ENCODE measurements at regions of chr14 and their contacts with region 1.

Region 1: DNA sequence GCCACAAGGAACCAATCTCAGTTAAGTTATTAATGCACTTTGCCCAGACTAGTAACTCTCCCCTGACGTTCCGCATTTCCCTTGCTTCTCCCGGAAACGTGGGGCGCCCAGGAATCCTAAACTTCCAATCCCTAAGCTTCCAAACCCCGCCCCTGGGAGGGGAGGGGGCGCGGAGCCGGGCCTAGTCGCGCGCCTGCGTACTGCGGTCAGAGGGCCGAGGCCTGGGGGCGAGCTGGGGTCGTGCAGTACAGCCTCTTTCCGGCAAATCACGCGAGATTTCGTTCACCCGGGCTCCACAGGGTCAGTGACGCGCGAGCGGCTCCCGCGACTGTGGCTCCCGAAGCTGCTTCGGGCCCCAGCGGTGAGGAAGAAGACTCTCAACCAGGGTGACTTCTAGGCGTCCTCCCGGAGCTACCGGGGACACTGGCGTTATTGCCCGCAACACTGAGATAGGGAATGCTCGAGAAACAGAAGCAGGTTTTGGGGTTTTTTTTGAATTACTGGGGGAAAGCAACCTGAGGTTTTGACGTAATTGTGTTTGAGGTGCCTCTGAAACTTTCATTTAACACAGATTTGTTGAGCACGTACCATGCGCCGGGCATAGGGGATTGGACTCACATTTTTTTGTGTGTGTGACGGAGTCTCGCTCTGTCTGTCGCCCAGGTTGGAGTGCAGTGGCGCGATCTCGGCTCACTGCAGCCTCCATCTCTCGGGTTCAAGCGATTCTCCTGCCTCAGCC is at the start of gene PTGR2:
- DNase-seq: peak; percentile 97
- ATAC-seq: peak; percentile 91
- H3K4me3 ChIP-seq: peak within 1 kb of the TSS; percentile 72 to 75 (median 72)
- H3K27ac ChIP-seq: peak within 1 kb of the TSS; percentile 95
- H3K4me1 ChIP-seq: peaks cover 46% of the 10 kb centered on the region
- H3K27me3 ChIP-seq: no peaks in the 10 kb centered on the region
- CTCF ChIP-seq: no peak
- EP300 ChIP-seq: no peak; a peak in 2 of 4 replicates
- POLR2A ChIP-seq: peak; percentile 88 to 97
- RAD21 ChIP-seq: no peak; the same call in 1 of the 2 replicates
- total RNA-seq, gene PTGR2: 4.3 and 5.1 TPM in 2 replicates

Region 2: DNA sequence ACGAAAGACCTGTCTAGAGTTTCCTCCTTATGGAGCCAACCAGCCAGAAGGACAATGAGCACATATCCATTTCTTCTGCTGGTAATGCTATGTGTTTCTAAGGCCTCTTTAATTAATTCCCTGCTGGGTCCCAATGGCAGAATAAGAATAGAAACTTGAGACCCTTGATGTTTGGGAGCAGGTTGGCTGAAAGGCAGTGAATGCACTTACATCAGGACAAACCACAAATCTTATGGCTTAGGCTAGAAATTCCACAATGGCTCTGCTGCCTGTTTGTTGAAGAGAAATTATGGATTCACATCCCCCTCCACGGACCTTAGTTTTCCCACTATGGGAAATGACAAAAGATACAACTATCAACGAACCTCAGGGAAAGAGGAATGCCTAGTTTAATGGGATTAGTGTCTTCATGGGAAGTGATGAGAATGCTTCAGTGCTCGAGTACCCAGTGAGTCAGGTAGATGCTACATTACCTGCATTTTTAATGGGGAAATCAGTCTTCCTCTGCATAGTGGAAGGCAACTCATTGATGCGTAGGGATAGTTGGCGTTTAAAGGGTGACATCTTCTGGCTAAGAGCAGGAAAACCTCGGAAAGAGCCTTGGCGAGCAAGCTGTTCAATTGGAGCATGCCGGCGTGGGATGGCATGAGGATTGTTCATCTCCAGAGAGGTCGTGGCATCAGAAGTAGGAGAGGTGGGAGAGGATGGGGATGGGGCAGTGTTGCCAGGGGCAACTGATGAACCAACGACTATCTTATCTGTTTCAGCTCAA is 568.0 kb before region 1 on chr14:
- CTCF ChIA-PET with region 1: no interaction called
- POLR2A ChIA-PET with region 1: no interaction called
- in situ Hi-C with region 1: no loop called
- intact Hi-C with region 1: no loop called
- DNase-seq: no peak
- ATAC-seq: no peak
- H3K4me3 ChIP-seq: no peak overlapping the region
- H3K27ac ChIP-seq: no peak overlapping the region
- H3K4me1 ChIP-seq: peaks cover 12% of the 10 kb centered on the region
- H3K27me3 ChIP-seq: no peaks in the 10 kb centered on the region
- CTCF ChIP-seq: peak; percentile 41
- EP300 ChIP-seq: no peak
- POLR2A ChIP-seq: no peak
- RAD21 ChIP-seq: no peak

Region 3: DNA sequence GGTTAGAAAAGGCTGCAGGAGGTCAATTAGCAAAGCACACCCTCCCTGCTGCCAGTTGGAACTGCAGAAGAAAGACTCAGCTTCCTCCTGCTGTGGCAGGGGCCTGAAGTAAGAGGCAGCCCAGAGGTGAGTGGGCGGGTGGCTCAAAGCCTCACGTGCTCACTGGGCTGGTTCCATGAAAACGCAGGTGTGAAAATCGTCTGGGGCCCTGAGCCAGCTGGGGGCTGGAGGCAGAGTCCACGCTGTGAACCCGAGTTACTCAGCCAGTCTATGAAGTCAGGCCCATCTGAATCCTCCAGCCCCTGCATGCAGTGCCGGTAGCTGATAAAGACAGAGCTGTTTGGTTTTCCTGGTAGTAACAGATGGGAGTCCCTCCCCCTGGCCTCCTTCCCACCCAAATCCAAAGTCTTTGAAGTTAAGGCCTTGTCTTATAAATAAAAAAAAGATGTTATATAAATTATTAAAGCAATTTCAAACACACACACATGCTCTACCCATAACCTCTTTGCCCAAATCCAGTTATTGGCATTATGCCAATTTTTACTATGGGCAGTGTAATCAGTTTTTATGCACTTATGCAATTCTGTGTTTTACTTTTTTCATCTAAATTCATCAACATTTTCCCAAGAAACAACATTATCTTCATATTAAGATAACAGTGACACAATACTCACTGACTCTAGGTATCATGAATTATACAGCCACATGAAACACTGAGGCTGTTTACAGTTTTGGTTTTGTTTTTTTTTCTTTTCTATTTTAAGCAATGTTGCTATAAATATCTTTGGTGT is 79.8 kb before region 1 on chr14:
- CTCF ChIA-PET with region 1: no interaction called
- POLR2A ChIA-PET with region 1: interaction called, 11 read pairs
- in situ Hi-C with region 1: no loop called
- intact Hi-C with region 1: no loop called
- DNase-seq: peak; percentile 94
- ATAC-seq: peak; percentile 95
- H3K4me3 ChIP-seq: peak overlapping the region in 1 of 3 experiments; percentile 27; a peak in 1 of 6 replicates
- H3K27ac ChIP-seq: peak overlapping the region; percentile 53
- H3K4me1 ChIP-seq: peaks cover 79% of the 10 kb centered on the region
- H3K27me3 ChIP-seq: no peaks in the 10 kb centered on the region
- CTCF ChIP-seq: peak; percentile 29
- EP300 ChIP-seq: peak in 1 of 2 experiments; percentile 69; a peak in 2 of 4 replicates
- POLR2A ChIP-seq: peak in 1 of 2 experiments; percentile 49; a peak in 1 of 4 replicates
- RAD21 ChIP-seq: peak; percentile 71

Region 4: DNA sequence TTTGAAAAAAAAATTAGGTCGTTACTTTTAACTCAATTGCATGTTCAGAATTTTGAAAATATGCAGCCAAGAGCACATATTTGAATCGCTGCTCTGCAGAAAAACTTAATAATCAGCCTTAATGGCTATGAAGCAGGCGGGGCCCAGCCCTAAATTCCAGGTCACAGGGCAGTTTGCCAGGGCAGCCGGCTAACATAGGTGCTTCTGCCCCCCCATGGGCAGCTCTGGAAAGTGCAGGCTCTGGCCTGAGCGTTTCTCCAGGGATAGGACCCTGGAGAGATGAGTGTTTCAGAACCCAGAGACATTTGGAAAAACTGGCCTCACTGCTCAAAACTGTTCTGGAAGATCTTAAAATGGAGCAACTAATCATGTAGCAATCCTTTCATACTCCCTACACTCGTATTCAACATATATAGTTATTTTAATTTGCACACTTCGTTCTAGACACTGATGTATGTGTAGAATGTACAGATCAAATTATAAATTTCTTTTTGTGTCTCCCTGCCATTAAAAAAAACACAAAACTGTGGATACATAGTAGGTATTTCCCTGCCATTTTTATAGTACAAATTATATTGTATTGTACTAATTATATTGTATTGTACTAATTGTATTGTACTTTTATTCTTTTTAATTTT is 26.1 kb before region 1 on chr14:
- CTCF ChIA-PET with region 1: no interaction called
- POLR2A ChIA-PET with region 1: interaction called, 105 read pairs
- in situ Hi-C with region 1: no loop called
- intact Hi-C with region 1: no loop called
- DNase-seq: peak; percentile 69
- ATAC-seq: peak; percentile 92
- H3K4me3 ChIP-seq: no peak overlapping the region
- H3K27ac ChIP-seq: no peak overlapping the region
- H3K4me1 ChIP-seq: peaks cover 15% of the 10 kb centered on the region
- H3K27me3 ChIP-seq: peaks cover 0 to 2% of the 10 kb centered on the region in 2 experiments; a peak in 2 of 5 replicates
- CTCF ChIP-seq: peak; percentile 90
- EP300 ChIP-seq: no peak
- POLR2A ChIP-seq: no peak
- RAD21 ChIP-seq: peak; percentile 94

Region 5: DNA sequence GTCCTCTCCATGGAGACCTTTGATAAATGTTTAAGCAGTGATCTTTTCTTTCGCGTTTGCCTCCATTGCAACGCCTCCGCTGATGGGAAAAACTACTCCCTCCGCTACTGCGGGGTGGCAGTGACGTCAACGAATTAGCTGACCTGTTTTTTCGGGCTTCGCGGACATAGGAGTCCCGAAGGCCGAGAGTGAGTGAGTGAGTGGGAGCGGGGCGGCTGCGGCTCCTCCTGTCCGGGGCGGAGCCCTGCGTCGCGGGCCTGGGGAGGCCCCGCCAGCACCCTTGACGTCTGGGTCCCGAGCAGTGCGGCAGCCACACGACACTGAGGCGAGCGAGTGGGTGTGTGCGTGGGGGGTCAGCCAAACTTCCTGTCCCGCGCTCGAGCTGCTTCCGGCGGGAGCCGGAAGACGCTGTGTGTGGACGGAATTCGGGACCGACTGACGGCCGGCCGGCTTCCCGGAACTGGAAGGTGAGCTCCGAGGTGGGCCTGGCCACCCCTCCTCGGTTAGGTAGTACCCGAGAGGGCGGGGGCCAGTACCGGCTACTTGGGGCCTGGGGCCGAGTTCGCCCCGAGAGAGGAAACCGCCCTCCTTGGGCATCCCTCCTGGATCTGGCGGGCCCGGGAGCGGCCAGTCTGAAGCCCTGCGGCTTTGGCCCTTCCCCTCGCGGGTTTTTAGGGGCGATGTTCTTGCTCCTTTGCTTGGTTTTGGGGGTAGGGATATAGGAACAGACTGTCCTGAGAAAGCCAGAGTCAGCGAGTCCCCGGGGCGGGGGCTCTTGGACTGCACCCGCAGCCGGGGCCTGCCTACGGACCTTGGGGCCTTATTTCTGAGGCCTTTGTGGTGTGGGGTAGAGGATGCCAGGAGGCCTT is 34.9 kb after region 1 on chr14 and contains the start of gene ZNF410:
- CTCF ChIA-PET with region 1: no interaction called
- POLR2A ChIA-PET with region 1: interaction called, 56 read pairs
- in situ Hi-C with region 1: no loop called
- intact Hi-C with region 1: loop called (anchors 2 kb)
- DNase-seq: peak; percentile 90
- ATAC-seq: peak; percentile 98
- H3K4me3 ChIP-seq: peak within 1 kb of the TSS; percentile 65 to 99 (median 90)
- H3K27ac ChIP-seq: peak within 1 kb of the TSS; percentile 88
- H3K4me1 ChIP-seq: peaks cover 35% of the 10 kb centered on the region
- H3K27me3 ChIP-seq: no peaks in the 10 kb centered on the region
- CTCF ChIP-seq: peak; percentile 27; the same call in 1 of the 2 replicates
- EP300 ChIP-seq: no peak
- POLR2A ChIP-seq: peak; percentile 63 to 91
- RAD21 ChIP-seq: peak; percentile 13; the same call in 1 of the 2 replicates
- total RNA-seq, gene ZNF410: 44.3 and 55.2 TPM in 2 replicates